AG04449 (cell line): ENCODE measurements at regions of chr1 and their contacts with region 1.

Region 1: GRCh38 chr1:55071477-55071876 is 32.1 kb downstream of the PCSK9 start:
- DNase-seq: no peak
- H3K4me3 ChIP-seq: no peak overlapping the region
- CTCF ChIP-seq: peak; percentile 73

Region 2: GRCh38 chr1:55060133-55060999 is 11.1 kb before region 1 on chr1:
- CTCF ChIA-PET with region 1: interaction called, 20 read pairs
- POLR2A ChIA-PET with region 1: no interaction called
- DNase-seq: no peak
- H3K4me3 ChIP-seq: no peak overlapping the region
- CTCF ChIP-seq: no peak

Region 3: DNA sequence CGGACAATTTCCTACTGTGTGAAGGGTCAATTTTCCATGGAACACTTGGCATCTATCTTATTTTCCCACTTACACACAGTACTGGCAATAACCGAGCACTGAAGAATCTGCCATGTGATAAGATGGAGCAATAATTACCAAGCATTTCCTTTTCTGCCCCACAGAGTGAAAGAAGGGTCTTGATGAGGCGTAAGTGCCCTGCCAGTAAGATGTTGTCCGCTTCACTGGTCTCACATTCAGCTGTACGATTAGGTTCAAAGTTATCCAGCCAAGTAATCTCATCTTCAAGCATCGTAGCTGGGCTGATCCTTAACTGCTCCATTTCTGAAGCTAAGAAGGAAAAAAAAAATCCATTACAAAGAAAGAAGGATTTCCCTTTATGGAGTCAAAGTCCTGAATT is 35.6 kb after region 1 on chr1:
- CTCF ChIA-PET with region 1: no interaction called
- POLR2A ChIA-PET with region 1: no interaction called
- DNase-seq: no peak
- H3K4me3 ChIP-seq: no peak overlapping the region
- CTCF ChIP-seq: no peak